ENCODE measurements at regions of chr5 and their contacts with region 1.

Region 1: GRCh38 chr5:132490486-132491367 is at the start of gene IRF1:
- DNase-seq: peak; percentile 95 to 97 (median 96)
- ATAC-seq: peak; percentile 94
- H3K4me3 ChIP-seq: peak within 1 kb of the TSS; percentile 76
- H3K27ac ChIP-seq: peak within 1 kb of the TSS; percentile 84
- H3K4me1 ChIP-seq: peaks cover 40 to 51% of the 10 kb centered on the region in 2 experiments
- H3K27me3 ChIP-seq: no peaks in the 10 kb centered on the region
- CTCF ChIP-seq: peak in 2 of 3 experiments; percentile 15 to 21; a peak in 2 of 6 replicates
- EP300 ChIP-seq: no peak
- POLR2A ChIP-seq: peak; percentile 85
- RAD21 ChIP-seq: 0 out of 4 replicates have a peak, but pooled peaks of 1 of the 2 experiments have one; percentile 5
- polyA plus RNA-seq, gene IRF1: 1.1 to 1.3 TPM

Region 2: DNA sequence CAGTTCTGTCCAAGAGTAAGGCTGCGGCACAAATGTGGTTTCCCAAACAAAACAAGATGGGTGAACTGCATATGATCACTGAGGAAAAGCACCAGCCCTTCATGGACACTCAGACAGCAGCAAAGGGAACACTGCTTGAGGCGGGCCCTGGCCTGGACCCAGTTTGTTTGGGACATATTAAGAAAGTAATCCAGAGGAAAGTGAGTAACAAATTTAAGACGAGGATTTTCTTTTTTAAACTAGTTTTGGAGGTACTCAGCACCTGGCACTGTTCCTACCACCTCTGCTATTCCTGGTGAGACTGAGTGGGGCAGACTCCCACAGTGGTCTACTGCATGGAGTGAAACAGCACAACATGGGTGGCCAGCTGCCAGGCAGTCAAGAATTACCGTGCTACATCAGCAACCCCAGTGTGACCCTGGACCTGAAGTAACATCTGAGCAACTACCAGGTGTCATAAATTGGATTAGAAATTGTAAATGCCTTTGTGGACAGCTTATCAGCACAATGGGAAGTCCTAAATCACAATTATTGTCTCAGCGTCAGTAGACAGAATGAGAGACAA is 291.5 kb before region 1 on chr5:
- CTCF ChIA-PET with region 1: no interaction called
- POLR2A ChIA-PET with region 1: no interaction called
- in situ Hi-C with region 1: no loop called
- intact Hi-C with region 1: no loop called
- DNase-seq: no peak
- ATAC-seq: no peak
- H3K4me3 ChIP-seq: no peak overlapping the region
- H3K27ac ChIP-seq: no peak overlapping the region
- H3K4me1 ChIP-seq: no peaks in the 10 kb centered on the region
- H3K27me3 ChIP-seq: no peaks in the 10 kb centered on the region
- CTCF ChIP-seq: no peak
- EP300 ChIP-seq: no peak
- POLR2A ChIP-seq: no peak
- RAD21 ChIP-seq: no peak

Region 3: DNA sequence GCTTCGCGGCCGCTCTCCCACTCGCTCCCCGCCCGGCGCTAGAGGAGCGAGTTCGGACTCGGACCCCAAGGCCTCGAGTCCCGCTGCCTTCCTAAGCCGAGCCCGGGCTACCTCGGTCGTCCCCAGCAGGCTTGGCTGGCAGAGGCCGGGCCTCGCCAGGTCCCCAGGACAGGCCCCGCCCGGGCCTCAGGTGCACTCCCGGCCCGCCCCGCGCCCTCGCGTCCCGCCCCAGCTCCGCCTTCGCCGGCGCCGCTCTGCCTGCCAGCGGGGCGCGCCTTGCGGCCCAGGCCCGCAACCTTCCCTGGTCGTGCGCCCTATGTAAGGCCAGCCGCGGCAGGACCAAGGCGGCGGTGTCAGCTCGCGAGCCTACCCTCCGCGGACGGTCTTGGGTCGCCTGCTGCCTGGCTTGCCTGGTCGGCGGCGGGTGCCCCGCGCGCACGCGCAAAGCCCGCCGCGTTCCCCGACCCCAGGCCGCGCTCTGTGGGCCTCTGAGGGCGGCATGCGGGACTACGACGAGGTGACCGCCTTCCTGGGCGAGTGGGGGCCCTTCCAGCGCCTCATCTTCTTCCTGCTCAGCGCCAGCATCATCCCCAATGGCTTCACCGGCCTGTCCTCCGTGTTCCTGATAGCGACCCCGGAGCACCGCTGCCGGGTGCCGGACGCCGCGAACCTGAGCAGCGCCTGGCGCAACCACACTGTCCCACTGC is 121.1 kb before region 1 on chr5 and contains the start of gene SLC22A5:
- CTCF ChIA-PET with region 1: interaction called, 3 read pairs
- POLR2A ChIA-PET with region 1: interaction called, 12 read pairs
- in situ Hi-C with region 1: no loop called
- intact Hi-C with region 1: no loop called
- DNase-seq: peak; percentile 83 to 86 (median 84)
- ATAC-seq: peak; percentile 91
- H3K4me3 ChIP-seq: peak within 1 kb of the TSS; percentile 66
- H3K27ac ChIP-seq: peak within 1 kb of the TSS; percentile 78
- H3K4me1 ChIP-seq: peaks cover 16 to 26% of the 10 kb centered on the region in 2 experiments; a peak in 4 of 5 replicates
- H3K27me3 ChIP-seq: no peaks in the 10 kb centered on the region
- CTCF ChIP-seq: no peak
- EP300 ChIP-seq: no peak
- POLR2A ChIP-seq: peak; percentile 73
- RAD21 ChIP-seq: no peak
- polyA plus RNA-seq, gene SLC22A5: 3.0 to 3.3 TPM

Region 4: GRCh38 chr5:132386644-132387286 is 104.0 kb before region 1 on chr5:
- CTCF ChIA-PET with region 1: interaction called, 4 read pairs
- POLR2A ChIA-PET with region 1: interaction called, 3 read pairs
- in situ Hi-C with region 1: loop called (anchors 10 kb)
- intact Hi-C with region 1: no loop called
- DNase-seq: peak; percentile 51 to 74 (median 67)
- ATAC-seq: peak; percentile 96
- H3K4me3 ChIP-seq: no peak overlapping the region
- H3K27ac ChIP-seq: no peak overlapping the region
- H3K4me1 ChIP-seq: peaks cover 10 to 12% of the 10 kb centered on the region in 2 experiments; a peak in 3 of 5 replicates
- H3K27me3 ChIP-seq: no peaks in the 10 kb centered on the region
- CTCF ChIP-seq: peak; percentile 81 to 87 (median 82)
- EP300 ChIP-seq: no peak
- POLR2A ChIP-seq: no peak
- RAD21 ChIP-seq: peak; percentile 92 to 95

Region 5: GRCh38 chr5:132410451-132411381 is 80.0 kb before region 1 on chr5:
- CTCF ChIA-PET with region 1: interaction called, 4 read pairs
- POLR2A ChIA-PET with region 1: interaction called, 12 read pairs
- in situ Hi-C with region 1: no loop called
- intact Hi-C with region 1: no loop called
- DNase-seq: peak; percentile 88 to 91 (median 90)
- ATAC-seq: peak; percentile 99
- H3K4me3 ChIP-seq: peak overlapping the region; percentile 60
- H3K27ac ChIP-seq: peak overlapping the region; percentile 81
- H3K4me1 ChIP-seq: peaks cover 17% of the 10 kb centered on the region in 2 experiments; a peak in 4 of 5 replicates
- H3K27me3 ChIP-seq: no peaks in the 10 kb centered on the region
- CTCF ChIP-seq: peak; percentile 81 to 93 (median 85)
- EP300 ChIP-seq: peak; percentile 12; the same call in 1 of the 2 replicates
- POLR2A ChIP-seq: peak; percentile 72
- RAD21 ChIP-seq: peak; percentile 83 to 88

Region 6: GRCh38 chr5:132426525-132427138 is 64.1 kb before region 1 on chr5:
- CTCF ChIA-PET with region 1: no interaction called
- POLR2A ChIA-PET with region 1: interaction called, 64 read pairs
- in situ Hi-C with region 1: no loop called
- intact Hi-C with region 1: no loop called
- DNase-seq: peak; percentile 75 to 91 (median 84)
- ATAC-seq: peak; percentile 81
- H3K4me3 ChIP-seq: no peak overlapping the region
- H3K27ac ChIP-seq: peak overlapping the region; percentile 76
- H3K4me1 ChIP-seq: peaks cover 52 to 71% of the 10 kb centered on the region in 2 experiments
- H3K27me3 ChIP-seq: no peaks in the 10 kb centered on the region
- CTCF ChIP-seq: peak; percentile 57 to 66 (median 59)
- EP300 ChIP-seq: peak; percentile 83; the same call in 1 of the 2 replicates
- POLR2A ChIP-seq: peak; percentile 71
- RAD21 ChIP-seq: peak; percentile 60 to 66

Region 7: GRCh38 chr5:132466433-132467286 is 24.1 kb before region 1 on chr5:
- CTCF ChIA-PET with region 1: no interaction called
- POLR2A ChIA-PET with region 1: interaction called, 27 read pairs
- in situ Hi-C with region 1: no loop called
- intact Hi-C with region 1: loop called (anchors 2 kb)
- DNase-seq: peak in 2 of 4 experiments; percentile 50 to 76
- ATAC-seq: peak; percentile 68
- H3K4me3 ChIP-seq: no peak overlapping the region
- H3K27ac ChIP-seq: peak overlapping the region; percentile 54; the same call in 1 of the 3 replicates
- H3K4me1 ChIP-seq: peaks cover 24 to 28% of the 10 kb centered on the region in 2 experiments
- H3K27me3 ChIP-seq: no peaks in the 10 kb centered on the region
- CTCF ChIP-seq: no peak
- EP300 ChIP-seq: 0 out of 2 replicates have a peak, but pooled peaks have one; percentile 22
- POLR2A ChIP-seq: no peak
- RAD21 ChIP-seq: peak in 1 of 2 experiments; percentile 34; a peak in 2 of 4 replicates

Region 8: DNA sequence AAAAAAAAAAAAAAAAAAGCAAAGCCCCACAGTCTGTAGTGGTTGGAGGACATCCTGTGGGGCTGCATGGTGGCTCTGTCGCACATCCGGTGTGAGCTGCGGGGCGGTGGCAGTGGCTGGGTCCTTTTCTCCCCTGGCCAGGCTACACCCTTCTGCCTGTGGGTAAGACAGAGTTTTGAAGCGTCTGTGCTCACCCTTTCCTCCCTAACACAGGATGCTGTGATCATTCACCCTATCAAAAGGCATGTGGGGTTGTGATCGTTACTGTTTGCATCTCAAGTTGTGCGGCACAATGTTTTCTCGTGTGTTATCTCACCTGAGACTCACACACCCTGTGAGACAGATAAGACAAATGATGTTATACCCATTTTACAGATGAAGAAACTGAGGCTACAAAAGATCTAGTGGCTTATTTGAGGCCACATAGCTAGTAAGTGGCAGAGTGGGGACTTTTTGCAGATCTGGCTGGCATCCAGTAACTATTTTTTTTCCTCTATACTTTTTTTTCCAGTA is 17.7 kb before region 1 on chr5:
- CTCF ChIA-PET with region 1: no interaction called
- POLR2A ChIA-PET with region 1: interaction called, 115 read pairs
- in situ Hi-C with region 1: no loop called
- intact Hi-C with region 1: no loop called
- DNase-seq: no peak
- ATAC-seq: no peak
- H3K4me3 ChIP-seq: no peak overlapping the region
- H3K27ac ChIP-seq: no peak overlapping the region
- H3K4me1 ChIP-seq: peaks cover 0 to 13% of the 10 kb centered on the region in 2 experiments; a peak in 3 of 5 replicates
- H3K27me3 ChIP-seq: no peaks in the 10 kb centered on the region
- CTCF ChIP-seq: no peak
- EP300 ChIP-seq: no peak
- POLR2A ChIP-seq: no peak
- RAD21 ChIP-seq: no peak

Region 9: GRCh38 chr5:132622608-132623007 is 131.9 kb after region 1 on chr5:
- CTCF ChIA-PET with region 1: no interaction called
- POLR2A ChIA-PET with region 1: no interaction called
- in situ Hi-C with region 1: no loop called
- intact Hi-C with region 1: no loop called
- DNase-seq: no peak
- ATAC-seq: no peak
- H3K4me3 ChIP-seq: no peak overlapping the region
- H3K27ac ChIP-seq: no peak overlapping the region
- H3K4me1 ChIP-seq: no peaks in the 10 kb centered on the region
- H3K27me3 ChIP-seq: no peaks in the 10 kb centered on the region
- CTCF ChIP-seq: no peak
- EP300 ChIP-seq: no peak
- POLR2A ChIP-seq: no peak
- RAD21 ChIP-seq: no peak

Region 10: GRCh38 chr5:132886064-132886823 is 395.5 kb after region 1 on chr5:
- CTCF ChIA-PET with region 1: no interaction called
- POLR2A ChIA-PET with region 1: no interaction called
- in situ Hi-C with region 1: no loop called
- intact Hi-C with region 1: no loop called
- DNase-seq: no peak
- ATAC-seq: no peak
- H3K4me3 ChIP-seq: no peak overlapping the region
- H3K27ac ChIP-seq: no peak overlapping the region
- H3K4me1 ChIP-seq: no peaks in the 10 kb centered on the region
- H3K27me3 ChIP-seq: no peaks in the 10 kb centered on the region
- CTCF ChIP-seq: no peak
- EP300 ChIP-seq: no peak
- POLR2A ChIP-seq: no peak
- RAD21 ChIP-seq: no peak